ENCODE measurements at regions of chr12 and their contacts with region 1.

Region 1: GRCh38 chr12:124036674-124037109 is 63.7 kb downstream of the ZNF664 start:
- DNase-seq: no peak
- H3K4me3 ChIP-seq: no peak overlapping the region
- H3K27ac ChIP-seq: no peak overlapping the region
- H3K4me1 ChIP-seq: no peaks in the 10 kb centered on the region
- H3K27me3 ChIP-seq: no peaks in the 10 kb centered on the region
- CTCF ChIP-seq: peak; percentile 78 to 94 (median 88)
- POLR2A ChIP-seq: no peak

Region 2: GRCh38 chr12:123744836-123745235 is 291.9 kb before region 1 on chr12:
- intact Hi-C with region 1: no loop called
- DNase-seq: no peak
- H3K4me3 ChIP-seq: no peak overlapping the region
- H3K27ac ChIP-seq: no peak overlapping the region
- H3K4me1 ChIP-seq: peaks cover 0 to 14% (median 0%) of the 10 kb centered on the region in 3 donors
- H3K27me3 ChIP-seq: no peaks in the 10 kb centered on the region
- CTCF ChIP-seq: no peak
- POLR2A ChIP-seq: no peak

Region 3: GRCh38 chr12:124321040-124321481 is 284.4 kb after region 1 on chr12:
- intact Hi-C with region 1: loop called (anchors 5 kb)
- DNase-seq: no peak
- H3K4me3 ChIP-seq: no peak overlapping the region
- H3K27ac ChIP-seq: no peak overlapping the region
- H3K4me1 ChIP-seq: no peaks in the 10 kb centered on the region
- H3K27me3 ChIP-seq: no peaks in the 10 kb centered on the region
- CTCF ChIP-seq: peak; percentile 75 to 94 (median 92)
- POLR2A ChIP-seq: no peak

Region 4: GRCh38 chr12:124767066-124767821 is 730.6 kb after region 1 on chr12:
- intact Hi-C with region 1: loop called (anchors 5 kb)
- DNase-seq: peak; percentile 13
- H3K4me3 ChIP-seq: no peak overlapping the region
- H3K27ac ChIP-seq: peak overlapping the region in 2 of 4 donors; percentile 72 to 82
- H3K4me1 ChIP-seq: peaks cover 22 to 63% (median 35%) of the 10 kb centered on the region in 3 donors
- H3K27me3 ChIP-seq: peaks cover 0 to 19% (median 0%) of the 10 kb centered on the region in 4 donors
- CTCF ChIP-seq: peak in 5 of 6 experiments; percentile 98 to 100 (median 99)
- POLR2A ChIP-seq: no peak

Measured in esophagus squamous epithelium (tissue), 5 donors.